Natural killer cell (primary cell): ENCODE measurements at regions of chr1 and their contacts with region 1.

Region 1: DNA sequence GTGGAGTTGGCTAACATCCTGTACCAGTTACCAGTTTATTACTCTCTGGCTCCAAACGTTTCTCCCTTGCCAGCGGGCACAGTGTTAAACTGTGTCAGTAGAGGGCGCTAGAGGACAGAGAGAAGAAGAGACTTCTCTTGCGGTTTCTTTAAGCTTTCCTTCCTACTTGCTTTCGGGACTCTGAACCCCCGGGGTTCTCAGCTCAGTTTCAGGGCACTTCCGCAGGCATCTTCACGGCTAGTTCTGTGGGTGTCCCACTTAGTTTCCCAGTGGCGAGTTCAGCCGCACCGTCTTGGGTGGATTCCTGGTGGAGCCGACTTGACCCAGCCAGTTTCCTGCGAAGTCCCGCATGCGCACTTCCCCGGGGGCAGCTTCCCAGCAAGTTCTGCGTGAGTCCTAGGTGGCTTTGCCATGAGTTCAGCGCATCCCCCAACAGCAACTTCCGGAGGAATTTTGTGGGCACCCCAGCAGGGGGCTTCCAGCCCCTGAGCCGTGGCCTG is 37.9 kb upstream of the BTG2 start:
- DNase-seq: peak; percentile 71 to 94
- ATAC-seq: peak; percentile 75 to 87 (median 80)
- H3K4me3 ChIP-seq: peak overlapping the region; percentile 56
- H3K4me3 Mint-ChIP-seq: peak overlapping the region; percentile 91
- H3K27ac ChIP-seq: peak overlapping the region; percentile 54
- H3K27ac Mint-ChIP-seq: peak overlapping the region; percentile 78 to 80
- H3K4me1 ChIP-seq: peaks cover 20% of the 10 kb centered on the region
- H3K4me1 Mint-ChIP-seq: peaks cover 12% of the 10 kb centered on the region in 2 donors
- H3K27me3 ChIP-seq: no peaks in the 10 kb centered on the region
- H3K27me3 Mint-ChIP-seq: peaks cover 0 to 6% of the 10 kb centered on the region in 2 donors
- CTCF ChIP-seq: peak; percentile 98

Region 2: GRCh38 chr1:203486618-203487370 is 219.4 kb after region 1 on chr1:
- intact Hi-C with region 1: loop called (anchors 1 kb)
- DNase-seq: peak in 1 of 2 donors; percentile 16
- ATAC-seq: no peak
- H3K4me3 ChIP-seq: no peak overlapping the region
- H3K4me3 Mint-ChIP-seq: peak overlapping the region; percentile 73
- H3K27ac ChIP-seq: no peak overlapping the region
- H3K27ac Mint-ChIP-seq: peak overlapping the region in 1 of 2 donors; percentile 19
- H3K4me1 ChIP-seq: peaks cover 14% of the 10 kb centered on the region
- H3K4me1 Mint-ChIP-seq: peaks cover 0 to 6% of the 10 kb centered on the region in 2 donors
- H3K27me3 ChIP-seq: no peaks in the 10 kb centered on the region
- H3K27me3 Mint-ChIP-seq: peaks cover 6 to 11% of the 10 kb centered on the region in 2 donors
- CTCF ChIP-seq: no peak

Region 3: DNA sequence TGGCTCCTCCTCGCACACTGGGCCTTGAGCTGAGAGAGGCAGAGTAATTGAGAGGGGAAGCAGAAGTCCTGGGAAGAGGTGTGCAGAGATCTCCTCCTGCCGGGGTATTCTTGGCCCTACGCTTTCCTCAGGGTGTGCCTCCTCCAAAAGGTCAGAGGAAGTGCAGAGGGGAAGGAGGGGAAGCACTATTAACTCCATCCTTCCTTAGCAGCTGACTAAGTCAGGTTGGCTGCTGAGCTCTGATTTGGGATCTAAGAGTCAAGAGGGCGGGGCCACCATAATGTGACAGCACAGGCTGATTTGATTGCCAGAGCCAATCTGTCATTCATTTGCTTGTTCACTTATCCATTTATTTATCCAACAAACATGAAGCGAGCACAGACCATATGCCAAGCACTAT is 371.6 kb after region 1 on chr1:
- intact Hi-C with region 1: no loop called
- DNase-seq: peak in 1 of 2 donors; percentile 36
- ATAC-seq: peak; percentile 36 to 45 (median 39)
- H3K4me3 ChIP-seq: no peak overlapping the region
- H3K4me3 Mint-ChIP-seq: peak overlapping the region; percentile 67
- H3K27ac ChIP-seq: no peak overlapping the region
- H3K27ac Mint-ChIP-seq: peak overlapping the region; percentile 88
- H3K4me1 ChIP-seq: peaks cover 48% of the 10 kb centered on the region
- H3K4me1 Mint-ChIP-seq: peaks cover 77 to 81% of the 10 kb centered on the region in 2 donors
- H3K27me3 ChIP-seq: no peaks in the 10 kb centered on the region
- H3K27me3 Mint-ChIP-seq: no peaks in the 10 kb centered on the region
- CTCF ChIP-seq: no peak